PC-3 (cell line): ENCODE measurements at regions of chr19 and their contacts with region 1.

Region 1: DNA sequence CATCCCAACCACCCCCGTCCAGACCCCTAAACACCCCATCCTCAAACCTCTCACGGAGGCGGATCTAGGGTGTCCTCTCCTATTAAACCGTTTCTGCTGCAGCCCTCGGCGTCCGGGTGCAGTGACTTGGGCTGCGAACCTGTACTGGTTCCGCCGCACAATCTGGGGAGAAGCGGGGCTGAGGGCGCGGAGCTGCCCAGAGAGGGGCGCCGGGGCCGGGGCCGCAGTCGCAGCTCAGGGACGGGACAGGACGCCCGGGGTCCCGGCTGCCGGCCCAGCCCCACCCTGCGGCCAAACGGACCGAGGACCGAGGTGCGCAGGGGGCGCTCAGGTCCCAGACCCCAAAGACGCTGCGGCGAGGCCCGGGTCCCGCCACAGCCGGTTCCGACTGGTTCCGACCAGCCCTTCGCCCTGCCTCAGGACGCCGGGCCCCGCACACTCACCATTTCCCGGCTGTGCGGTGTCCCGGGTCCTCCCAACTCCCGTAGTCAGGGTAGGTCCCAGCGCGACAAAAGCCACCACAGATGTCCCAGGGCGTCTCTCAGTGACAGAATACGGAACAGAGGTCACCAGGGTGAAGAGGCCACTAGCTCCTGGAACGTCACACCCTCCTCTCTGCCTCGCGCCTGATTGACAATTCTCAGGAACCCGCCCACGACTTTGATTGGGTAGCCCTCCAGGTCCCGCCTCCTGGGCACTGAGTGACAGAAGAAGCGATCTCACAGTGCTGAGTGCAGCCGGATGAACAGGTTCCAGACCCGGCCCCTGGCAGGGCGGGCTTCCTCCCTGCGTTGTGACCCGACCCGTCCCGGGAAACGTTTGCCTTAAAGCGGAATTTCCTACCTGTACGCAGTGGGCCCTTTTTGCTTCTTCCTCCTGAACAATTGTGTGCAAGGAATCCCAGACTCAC is at the start of gene ZNF44:
- DNase-seq: peak; percentile 99
- ATAC-seq: peak; percentile 97
- H3K4me3 ChIP-seq: peak within 1 kb of the TSS; percentile 99
- H3K27ac ChIP-seq: peak within 1 kb of the TSS; percentile 26
- H3K4me1 ChIP-seq: peaks cover 10% of the 10 kb centered on the region
- H3K27me3 ChIP-seq: no peaks in the 10 kb centered on the region
- CTCF ChIP-seq: no peak
- total RNA-seq, gene ZNF44: 3.0 and 8.2 TPM in 2 replicates

Region 2: GRCh38 chr19:11924886-11925650 is 369.4 kb before region 1 on chr19 and contains the start of gene ZNF700:
- CTCF ChIA-PET with region 1: interaction called, 19 read pairs
- POLR2A ChIA-PET with region 1: no interaction called
- intact Hi-C with region 1: no loop called
- DNase-seq: peak; percentile 98
- ATAC-seq: peak; percentile 92
- H3K4me3 ChIP-seq: peak within 1 kb of the TSS; percentile 83
- H3K27ac ChIP-seq: peak within 1 kb of the TSS; percentile 53
- H3K4me1 ChIP-seq: peaks cover 4% of the 10 kb centered on the region; the same call in 1 of the 2 replicates
- H3K27me3 ChIP-seq: no peaks in the 10 kb centered on the region
- CTCF ChIP-seq: no peak
- total RNA-seq, gene ZNF700: 6.7 and 9.5 TPM in 2 replicates

Region 3: GRCh38 chr19:12156223-12157058 is 138.1 kb before region 1 on chr19 and contains the start of gene ZNF625:
- CTCF ChIA-PET with region 1: no interaction called
- POLR2A ChIA-PET with region 1: no interaction called
- intact Hi-C with region 1: loop called (anchors 5 kb)
- DNase-seq: peak; percentile 91
- ATAC-seq: peak; percentile 100
- H3K4me3 ChIP-seq: peak within 1 kb of the TSS; percentile 94
- H3K27ac ChIP-seq: no peak within 1 kb of the TSS
- H3K4me1 ChIP-seq: peaks cover 9% of the 10 kb centered on the region
- H3K27me3 ChIP-seq: no peaks in the 10 kb centered on the region
- CTCF ChIP-seq: no peak
- total RNA-seq, gene ZNF625: 2.5 and 7.7 TPM in 2 replicates

Region 4: GRCh38 chr19:12208221-12208620 is 86.3 kb before region 1 on chr19:
- CTCF ChIA-PET with region 1: no interaction called
- POLR2A ChIA-PET with region 1: no interaction called
- intact Hi-C with region 1: no loop called
- DNase-seq: no peak
- ATAC-seq: no peak
- H3K4me3 ChIP-seq: no peak overlapping the region
- H3K27ac ChIP-seq: no peak overlapping the region
- H3K4me1 ChIP-seq: no peaks in the 10 kb centered on the region
- H3K27me3 ChIP-seq: no peaks in the 10 kb centered on the region
- CTCF ChIP-seq: no peak

Region 5: DNA sequence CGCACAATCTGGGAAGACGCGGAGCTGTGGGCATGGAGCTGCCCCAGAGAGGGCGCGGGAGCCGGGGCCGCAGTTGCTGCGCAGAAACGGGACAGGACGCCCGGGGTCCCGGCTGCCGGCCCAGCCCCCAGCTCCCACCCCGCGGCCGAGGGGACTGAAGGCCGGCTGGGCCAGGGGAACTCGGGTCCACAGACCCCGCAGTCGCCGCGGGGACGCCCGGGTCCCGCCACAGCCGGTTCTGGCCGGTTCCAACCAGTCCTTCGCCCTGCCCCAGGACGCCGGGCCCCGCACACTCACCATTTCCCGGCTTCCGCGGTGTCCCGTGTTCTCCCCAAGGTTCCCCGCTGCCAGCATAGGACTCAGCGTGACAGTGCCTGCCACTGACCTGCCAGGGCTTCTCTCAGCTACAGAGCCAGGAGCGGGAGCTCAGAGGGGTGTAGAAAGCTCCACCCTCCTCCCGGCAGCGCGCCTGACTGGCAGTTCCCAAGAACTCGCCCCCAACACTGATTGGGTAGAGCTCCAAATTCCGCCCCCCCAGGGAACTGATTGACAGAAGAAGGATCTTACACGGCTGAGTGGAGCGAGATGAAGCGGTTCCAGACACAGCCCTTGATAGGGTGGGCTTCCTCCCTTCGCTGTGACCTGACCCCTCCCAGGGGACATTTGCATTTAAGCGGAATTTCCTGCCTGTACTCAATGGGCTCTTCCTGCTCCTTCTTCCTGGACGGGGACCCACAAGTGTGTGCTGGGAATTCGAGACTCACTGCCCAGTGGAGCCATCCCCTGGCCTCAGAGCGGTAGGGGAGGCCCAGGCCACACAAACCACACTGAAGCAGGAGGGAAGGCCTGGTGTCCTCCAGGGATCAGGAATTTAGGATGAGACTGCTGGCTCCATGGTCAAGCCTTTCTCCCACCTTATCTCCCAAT is 71.0 kb after region 1 on chr19 and contains the start of gene ZNF442:
- CTCF ChIA-PET with region 1: no interaction called
- POLR2A ChIA-PET with region 1: no interaction called
- intact Hi-C with region 1: loop called (anchors 5 kb)
- DNase-seq: peak; percentile 96
- ATAC-seq: peak; percentile 97
- H3K4me3 ChIP-seq: peak within 1 kb of the TSS; percentile 82
- H3K27ac ChIP-seq: no peak within 1 kb of the TSS
- H3K4me1 ChIP-seq: no peaks in the 10 kb centered on the region; the same call in 1 of the 2 replicates
- H3K27me3 ChIP-seq: no peaks in the 10 kb centered on the region
- CTCF ChIP-seq: peak; percentile 64
- total RNA-seq, gene ZNF442: 0.63 and 1.1 TPM in 2 replicates

Region 6: DNA sequence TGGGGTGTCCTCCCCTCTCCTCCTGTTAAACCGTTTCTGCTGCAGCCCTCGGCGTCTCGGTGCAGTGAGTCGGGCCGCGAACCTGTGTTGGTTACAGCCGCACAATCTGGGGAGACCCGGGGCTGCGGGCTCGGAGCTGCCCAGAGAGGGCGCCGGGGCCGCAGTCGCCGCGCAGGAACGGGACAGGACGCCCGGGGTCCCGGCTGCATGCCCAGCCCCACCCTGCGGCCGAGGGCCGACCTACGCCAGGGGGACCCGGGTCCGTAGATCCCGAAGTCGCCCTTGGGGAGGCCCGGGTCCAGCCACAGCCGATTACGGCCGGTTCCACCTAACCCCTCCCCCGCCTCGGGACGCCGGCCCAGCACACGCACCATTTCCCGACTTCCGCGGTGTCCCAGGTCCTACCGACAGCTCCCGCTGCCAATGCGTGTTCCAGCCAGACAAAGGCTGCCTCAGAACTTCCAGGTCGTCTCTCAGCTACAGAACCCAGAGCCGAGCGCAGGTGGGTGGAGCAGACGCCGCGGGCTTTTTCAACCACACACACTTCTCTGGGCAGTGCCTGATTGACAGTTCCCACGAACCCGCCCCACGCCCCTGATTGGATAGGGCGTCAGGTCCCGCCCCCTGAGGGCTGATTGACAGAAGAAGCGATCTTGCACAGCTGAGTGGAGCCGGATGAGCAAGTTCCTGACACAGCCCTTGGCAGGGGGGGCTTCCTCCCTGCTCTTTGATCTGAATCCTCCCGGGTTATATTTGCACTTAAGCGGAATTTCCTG is 146.2 kb after region 1 on chr19 and contains the start of gene ZNF443:
- CTCF ChIA-PET with region 1: no interaction called
- POLR2A ChIA-PET with region 1: no interaction called
- intact Hi-C with region 1: loop called (anchors 2 kb)
- DNase-seq: peak; percentile 100
- ATAC-seq: peak; percentile 95
- H3K4me3 ChIP-seq: peak within 1 kb of the TSS; percentile 72
- H3K27ac ChIP-seq: peak within 1 kb of the TSS; percentile 52
- H3K4me1 ChIP-seq: no peaks in the 10 kb centered on the region
- H3K27me3 ChIP-seq: no peaks in the 10 kb centered on the region
- CTCF ChIP-seq: no peak
- total RNA-seq, gene ZNF443: 3.4 and 3.7 TPM in 2 replicates